ENCODE measurements at regions of chr1 and their contacts with region 1.

Region 1: DNA sequence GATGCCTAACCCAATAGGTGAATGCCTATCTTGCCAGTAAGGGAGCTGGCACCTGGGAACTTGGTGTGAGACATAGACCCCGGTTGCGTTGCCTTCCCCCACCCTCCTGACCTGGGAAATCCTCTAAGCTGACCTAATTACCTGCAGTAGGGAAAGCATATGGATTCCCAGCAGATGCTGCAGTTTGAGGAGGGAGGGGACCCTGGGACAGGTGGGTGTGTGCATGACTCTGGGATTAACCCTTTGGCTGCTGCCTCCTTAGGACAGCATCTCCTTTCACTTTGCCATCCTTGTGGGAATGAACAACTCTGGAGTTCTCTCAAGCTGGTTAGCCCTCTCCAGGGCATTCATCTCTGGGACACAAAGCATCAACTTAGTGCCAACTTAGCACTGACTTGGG is 16.4 kb upstream of the NFASC start:
- DNase-seq: no peak
- H3K4me3 Mint-ChIP-seq: no peak overlapping the region
- H3K27ac Mint-ChIP-seq: no peak overlapping the region
- H3K4me1 Mint-ChIP-seq: no peaks in the 10 kb centered on the region
- H3K27me3 Mint-ChIP-seq: peaks cover 77% of the 10 kb centered on the region
- CTCF ChIP-seq: no peak

Region 2: DNA sequence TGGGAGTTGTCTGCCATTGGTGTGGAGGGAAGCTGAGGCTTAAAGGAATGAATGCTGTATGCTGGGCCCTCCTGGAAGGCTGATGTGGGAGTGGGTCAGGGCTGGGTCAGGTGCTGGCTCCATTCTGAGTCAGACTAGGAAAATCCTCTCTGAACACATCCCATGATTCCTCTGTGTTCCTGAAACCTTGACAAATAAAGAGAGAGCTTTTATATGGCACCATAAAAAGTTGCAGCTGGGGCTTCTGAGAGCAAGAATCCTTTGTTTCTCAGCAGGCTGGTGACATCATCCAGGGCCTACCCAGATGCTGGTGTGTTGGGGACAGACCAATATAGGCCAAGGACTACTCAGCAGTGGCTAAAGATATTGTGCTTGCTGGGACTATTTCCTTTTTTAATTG is 11.4 kb before region 1 on chr1:
- CTCF ChIA-PET with region 1: interaction called, 4 read pairs
- POLR2A ChIA-PET with region 1: interaction called, 14 read pairs
- intact Hi-C with region 1: no loop called
- DNase-seq: no peak
- H3K4me3 Mint-ChIP-seq: no peak overlapping the region
- H3K27ac Mint-ChIP-seq: no peak overlapping the region
- H3K4me1 Mint-ChIP-seq: no peaks in the 10 kb centered on the region
- H3K27me3 Mint-ChIP-seq: peaks cover 73% of the 10 kb centered on the region
- CTCF ChIP-seq: no peak

Region 3: GRCh38 chr1:205416322-205416721 is 562.0 kb after region 1 on chr1:
- CTCF ChIA-PET with region 1: no interaction called
- POLR2A ChIA-PET with region 1: no interaction called
- intact Hi-C with region 1: no loop called
- DNase-seq: no peak
- H3K4me3 Mint-ChIP-seq: no peak overlapping the region
- H3K27ac Mint-ChIP-seq: no peak overlapping the region
- H3K4me1 Mint-ChIP-seq: no peaks in the 10 kb centered on the region
- H3K27me3 Mint-ChIP-seq: peaks cover 40% of the 10 kb centered on the region
- CTCF ChIP-seq: no peak